Activated T-helper 1 cell treated with anti-CD3 and anti-CD28 coated beads, Interleukin-12 subunit alpha, Interleukin-12 subunit beta, Interleukin-2, Interleukin-4 antibody, amounts not matched to agents 30 ng/mL and 10 ng/mL and 1 ng/mL, durations not matched to agents 14 hours and 24 hours and 36 hours (primary cell): ENCODE measurements at regions of chr11 and their contacts with region 1.

Region 1: DNA sequence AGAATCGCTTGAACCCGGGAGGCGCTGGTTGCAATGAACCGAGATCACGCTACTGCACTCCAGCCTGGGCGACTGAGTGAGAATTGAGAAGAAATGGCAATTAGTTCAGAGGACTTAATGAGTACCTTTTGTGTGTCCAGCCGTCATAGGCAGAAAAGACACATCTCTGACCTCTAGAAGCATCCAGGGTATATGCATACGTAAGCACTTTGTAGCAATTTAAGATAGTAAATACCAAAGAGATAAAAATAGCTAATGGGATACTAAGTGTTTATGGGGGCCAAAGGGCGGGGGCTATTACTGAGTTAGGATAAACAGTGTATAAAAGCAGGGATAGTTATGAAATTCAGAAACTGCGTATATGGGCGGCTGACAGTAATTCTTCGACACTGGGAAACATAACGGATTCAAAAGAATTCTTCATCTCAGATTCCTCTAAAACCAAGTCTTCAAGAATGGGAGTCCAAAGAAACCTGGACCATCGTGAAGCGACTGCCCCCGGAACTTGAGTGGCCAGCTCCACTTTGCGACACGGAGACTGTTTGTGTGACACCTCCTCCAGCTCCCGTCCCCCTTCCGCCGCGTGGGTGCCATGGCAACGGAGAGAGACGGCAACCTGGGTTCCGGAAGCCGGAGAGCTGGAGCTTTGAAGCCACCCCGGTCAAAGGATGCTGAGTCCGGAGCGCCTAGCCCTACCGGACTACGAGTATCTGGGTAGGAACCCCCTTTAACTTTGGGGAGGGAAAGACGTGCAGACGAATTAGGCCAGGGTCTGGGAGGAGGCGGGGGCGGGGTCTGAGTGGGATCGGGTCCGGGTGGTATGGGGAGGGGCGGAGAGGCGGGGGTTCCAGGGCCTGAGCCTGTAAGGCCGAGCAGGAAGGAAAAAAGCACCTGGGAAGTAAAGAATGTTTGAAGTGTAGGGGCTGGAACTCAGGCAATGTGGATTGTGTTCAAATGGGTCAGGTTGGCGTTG is at the start of gene CSTPP1:
- DNase-seq: peak; percentile 89
- H3K4me3 Mint-ChIP-seq: peak within 1 kb of the TSS; percentile 92
- H3K27ac Mint-ChIP-seq: peak within 1 kb of the TSS; percentile 88
- H3K4me1 Mint-ChIP-seq: peaks cover 14% of the 10 kb centered on the region
- H3K27me3 Mint-ChIP-seq: peaks cover 7% of the 10 kb centered on the region
- total RNA-seq, gene CSTPP1: 15.1 and 16.7 TPM in 2 replicates

Region 2: GRCh38 chr11:46845740-46846509 is 90.5 kb before region 1 on chr11 and contains the start of gene CKAP5:
- intact Hi-C with region 1: loop called (anchors 1 kb)
- DNase-seq: peak; percentile 87
- H3K4me3 Mint-ChIP-seq: peak within 1 kb of the TSS; percentile 98
- H3K27ac Mint-ChIP-seq: peak within 1 kb of the TSS; percentile 98
- H3K4me1 Mint-ChIP-seq: peaks cover 41% of the 10 kb centered on the region
- H3K27me3 Mint-ChIP-seq: peaks cover 4% of the 10 kb centered on the region
- total RNA-seq, gene CKAP5: 121 TPM in 2 replicates

Region 3: GRCh38 chr11:46907606-46908005 is 28.8 kb before region 1 on chr11:
- intact Hi-C with region 1: no loop called
- DNase-seq: no peak
- H3K4me3 Mint-ChIP-seq: no peak overlapping the region
- H3K27ac Mint-ChIP-seq: no peak overlapping the region
- H3K4me1 Mint-ChIP-seq: no peaks in the 10 kb centered on the region
- H3K27me3 Mint-ChIP-seq: peaks cover 30% of the 10 kb centered on the region

Region 4: GRCh38 chr11:46920755-46921154 is 15.7 kb before region 1 on chr11:
- intact Hi-C with region 1: loop called (anchors 1 kb)
- DNase-seq: no peak
- H3K4me3 Mint-ChIP-seq: no peak overlapping the region
- H3K27ac Mint-ChIP-seq: no peak overlapping the region
- H3K4me1 Mint-ChIP-seq: peaks cover 24% of the 10 kb centered on the region
- H3K27me3 Mint-ChIP-seq: peaks cover 43% of the 10 kb centered on the region